Cardiac septum (tissue), 1 donor: ENCODE measurements at regions of chr9 and their contacts with region 1.

Region 1: GRCh38 chr9:130461218-130461630 is 16.5 kb downstream of the ASS1 start:
- DNase-seq: no peak

Region 2: DNA sequence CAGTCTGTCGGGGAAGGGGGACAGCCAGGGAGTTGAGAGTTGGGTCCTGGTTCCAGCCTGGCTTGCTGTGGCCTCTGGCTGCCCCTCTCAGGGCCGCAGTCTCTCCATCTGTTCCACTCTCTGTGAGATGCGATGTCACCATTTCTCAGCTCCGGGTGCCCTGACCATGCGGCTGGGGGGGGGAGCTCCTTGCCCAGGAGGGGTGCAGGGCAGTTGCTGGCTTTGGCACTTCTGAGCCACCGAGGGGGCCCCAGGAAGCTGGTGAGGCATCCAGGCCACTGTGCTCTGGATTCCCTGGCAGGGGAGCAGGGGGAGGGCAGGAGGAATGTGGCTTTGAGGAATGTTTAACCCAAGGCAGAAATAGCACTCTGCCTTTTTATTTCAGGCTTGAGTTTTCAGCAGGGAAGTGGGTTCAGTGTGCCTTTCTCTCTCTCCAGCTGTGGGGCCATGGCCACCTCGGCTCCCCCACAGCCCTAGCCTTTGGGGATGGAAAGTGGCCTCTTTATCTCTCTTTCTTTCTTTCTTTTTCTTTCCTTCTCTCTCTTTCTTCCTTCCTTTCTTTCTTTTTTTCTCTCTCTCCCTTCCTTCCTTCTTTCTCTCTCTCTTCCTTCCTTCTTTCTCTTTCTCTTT is 278.0 kb before region 1 on chr9:
- intact Hi-C with region 1: no loop called
- DNase-seq: no peak

Region 3: DNA sequence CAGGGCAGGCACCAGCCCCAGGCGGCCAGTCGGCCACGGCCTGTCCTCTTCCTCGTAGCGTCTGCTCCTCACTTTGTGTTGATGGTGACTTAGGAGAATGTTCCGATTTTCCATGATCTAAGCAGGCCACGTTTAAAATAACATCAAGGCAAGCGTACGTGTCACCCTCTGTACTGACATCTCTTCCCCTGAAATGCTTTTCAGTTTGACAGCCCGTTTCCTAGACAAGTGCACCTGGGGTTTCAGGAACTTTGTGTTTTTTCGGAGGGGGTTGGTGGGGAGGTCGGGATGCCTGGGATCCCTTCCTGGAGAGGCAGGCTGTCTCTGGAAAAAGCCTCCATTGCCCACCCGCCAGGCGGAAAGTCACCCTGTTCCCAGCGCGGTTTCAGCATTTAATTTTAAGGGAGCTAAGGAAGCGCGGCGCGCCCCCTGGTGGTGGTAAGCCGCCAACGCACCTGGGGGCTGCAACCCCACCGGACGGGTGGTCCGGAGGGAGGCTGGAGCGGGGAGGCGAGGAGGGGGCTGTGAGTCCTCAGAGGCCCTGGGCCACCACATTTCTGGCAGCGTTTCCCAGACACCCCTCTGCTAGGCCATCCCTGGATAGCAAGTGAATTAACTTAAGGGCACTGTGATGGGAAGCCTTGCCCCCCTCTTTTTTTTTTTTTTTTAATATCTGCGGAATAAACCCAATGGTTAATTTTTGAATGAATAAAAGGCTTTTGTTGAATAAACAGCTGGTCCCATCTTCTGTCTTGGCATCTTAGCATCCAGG is 225.1 kb before region 1 on chr9:
- intact Hi-C with region 1: no loop called
- DNase-seq: no peak

Region 4: DNA sequence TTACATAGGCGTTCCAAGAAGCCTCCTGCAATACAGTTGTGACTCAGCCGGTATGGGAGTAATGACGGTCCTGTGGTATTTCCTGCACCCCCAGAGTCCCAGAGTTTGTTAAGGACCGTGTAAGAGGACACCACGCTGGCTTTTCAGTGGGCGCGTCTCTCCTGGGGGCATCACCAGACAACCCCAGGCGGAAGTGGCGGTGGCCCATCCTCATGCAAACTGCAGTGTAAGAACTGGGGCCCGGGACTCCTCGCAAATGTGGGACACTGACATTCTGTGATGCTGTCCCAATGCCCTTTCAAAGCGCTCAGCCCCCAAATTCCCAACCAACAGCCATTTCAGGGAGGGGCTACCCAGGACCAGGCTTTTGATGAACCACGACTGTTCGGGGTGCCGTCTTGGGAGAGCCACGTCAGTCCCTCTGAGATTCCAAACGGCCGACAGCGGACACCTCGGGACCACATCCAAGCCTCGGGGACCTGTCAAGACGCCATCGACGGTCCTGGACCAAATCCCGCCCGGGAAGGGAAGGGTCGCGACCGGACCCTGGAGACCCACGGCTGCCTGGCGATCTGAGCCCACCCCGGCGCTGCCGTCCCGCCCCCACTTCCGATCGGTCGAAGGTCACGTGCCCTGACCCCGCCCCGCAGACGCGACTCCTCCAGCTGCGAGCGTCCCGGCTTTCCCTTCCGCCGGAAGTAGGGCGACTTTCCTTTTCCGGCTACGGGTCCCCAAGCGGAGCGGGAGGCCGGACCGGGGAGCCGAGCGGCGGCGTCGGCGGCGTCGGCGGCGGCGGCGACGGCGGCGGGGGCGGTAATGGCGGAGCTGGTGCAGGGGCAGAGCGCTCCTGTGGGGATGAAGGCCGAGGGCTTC is 117.9 kb after region 1 on chr9 and contains the start of gene FUBP3:
- intact Hi-C with region 1: loop called (anchors 5 kb)
- DNase-seq: peak; percentile 97
- total RNA-seq, gene FUBP3: 36.8 TPM

Region 5: DNA sequence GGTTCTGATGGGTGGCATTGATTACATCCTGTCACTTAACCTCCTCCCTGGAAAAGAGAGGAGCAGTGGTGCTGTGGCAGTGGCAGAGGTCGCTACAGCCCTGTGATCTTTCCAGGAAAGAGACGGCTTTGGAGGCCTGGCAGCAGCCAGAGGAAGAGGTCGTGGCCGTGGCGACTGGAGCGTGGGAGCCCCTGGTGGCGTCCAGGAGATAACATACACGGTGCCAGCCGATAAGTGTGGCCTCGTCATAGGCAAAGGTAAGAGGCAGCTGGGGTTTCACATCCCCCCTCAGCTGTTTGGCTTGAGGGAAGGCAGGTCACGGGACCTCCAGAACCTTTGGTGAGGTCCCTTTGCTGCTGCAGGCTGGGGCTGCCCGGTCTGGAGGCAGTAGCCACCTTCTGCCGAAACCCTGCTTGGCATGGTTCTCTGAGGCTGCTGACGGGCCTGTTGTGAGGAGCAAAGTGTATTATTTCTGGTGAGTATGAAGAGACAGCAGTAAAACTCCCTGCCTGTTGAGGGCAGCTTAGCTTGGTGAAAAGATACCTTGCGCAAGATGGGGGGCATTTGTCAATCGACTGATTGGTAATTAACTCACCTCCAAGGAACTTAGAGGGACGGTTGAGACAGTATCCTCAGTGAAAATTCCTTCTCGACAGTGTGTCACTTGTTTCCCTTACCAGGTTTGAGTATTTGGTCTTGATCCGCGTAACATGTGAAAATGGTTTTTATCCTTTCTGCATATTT is 165.2 kb after region 1 on chr9:
- intact Hi-C with region 1: loop called (anchors 5 kb)
- DNase-seq: no peak

Region 6: GRCh38 chr9:130682490-130683121 is 221.4 kb after region 1 on chr9:
- intact Hi-C with region 1: loop called (anchors 1 kb)
- DNase-seq: peak; percentile 90

Region 7: DNA sequence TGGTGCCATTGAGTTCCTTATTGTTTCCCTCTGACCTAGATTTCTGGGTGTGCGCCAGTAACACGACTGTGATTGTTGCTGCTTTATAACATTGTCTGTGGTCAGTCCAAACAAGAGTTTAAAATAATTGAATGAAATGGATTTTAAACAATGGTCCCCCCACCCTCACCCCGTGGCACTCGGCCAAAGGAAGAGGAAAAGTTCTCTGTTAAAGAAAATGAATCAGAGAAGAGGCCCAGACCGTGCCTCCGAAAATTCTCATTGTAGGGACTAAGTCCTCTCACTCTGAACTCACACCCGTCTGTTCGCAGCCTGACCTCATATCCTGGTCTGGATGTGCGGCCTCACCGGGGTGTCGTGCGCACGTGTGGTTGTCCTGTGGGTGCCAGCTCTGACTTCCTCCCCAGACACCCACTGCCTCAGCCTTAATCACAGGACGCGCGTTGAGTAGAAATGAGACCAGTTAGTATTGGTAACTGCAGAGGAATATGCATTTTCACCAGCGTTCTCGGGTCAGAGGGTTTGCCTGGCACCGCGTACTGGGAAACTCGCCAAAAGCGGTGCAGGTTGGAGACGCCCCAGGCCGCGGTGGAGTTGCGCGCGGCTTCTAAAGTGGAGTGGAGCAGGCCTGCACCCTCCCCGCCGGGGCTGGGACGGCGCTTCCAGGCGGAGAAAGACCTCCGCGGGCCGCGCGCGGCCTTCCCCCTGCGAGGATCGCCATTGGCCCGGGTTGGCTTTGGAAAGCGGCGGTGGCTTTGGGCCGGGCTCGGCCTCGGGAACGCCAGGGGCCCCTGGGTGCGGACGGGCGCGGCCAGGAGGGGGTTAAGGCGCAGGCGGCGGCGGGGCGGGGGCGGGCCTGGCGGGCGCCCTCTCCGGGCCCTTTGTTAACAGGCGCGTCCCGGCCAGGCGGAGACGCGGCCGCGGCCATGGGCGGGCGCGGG is 373.4 kb after region 1 on chr9 and contains the start of gene ABL1:
- intact Hi-C with region 1: no loop called
- DNase-seq: peak; percentile 82
- total RNA-seq, gene ABL1: 38.0 TPM

Region 8: DNA sequence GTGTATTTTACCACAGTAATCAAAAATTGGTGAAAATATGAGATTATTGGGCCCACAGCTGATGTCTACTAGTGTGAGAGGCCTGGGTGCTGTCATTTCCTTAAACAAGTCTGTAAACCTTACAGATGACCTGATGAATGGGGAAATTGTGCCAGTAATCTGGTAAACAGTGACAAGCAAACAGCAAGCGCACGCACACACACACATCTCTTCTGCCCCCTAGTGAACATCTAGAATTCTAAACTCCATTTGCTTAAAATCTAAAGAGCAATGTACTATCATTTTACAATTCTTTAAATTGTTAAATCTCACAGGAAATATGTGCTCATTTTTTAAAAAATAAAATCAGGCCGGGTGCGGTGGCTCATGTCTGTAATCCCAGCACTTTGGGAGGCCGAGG is 1286.1 kb after region 1 on chr9:
- intact Hi-C with region 1: no loop called
- DNase-seq: no peak